Activated T-helper 2 cell treated with anti-CD3 and anti-CD28 coated beads, Interferon-gamma antibody, Interleukin-2, Interleukin-4, amounts not matched to agents 10 μg/mL and 5 μg/mL and 100 μg/mL, durations not matched to agents 14 hours and 24 hours and 36 hours (primary cell): ENCODE measurements at regions of chr12 and their contacts with region 1.

Region 1: DNA sequence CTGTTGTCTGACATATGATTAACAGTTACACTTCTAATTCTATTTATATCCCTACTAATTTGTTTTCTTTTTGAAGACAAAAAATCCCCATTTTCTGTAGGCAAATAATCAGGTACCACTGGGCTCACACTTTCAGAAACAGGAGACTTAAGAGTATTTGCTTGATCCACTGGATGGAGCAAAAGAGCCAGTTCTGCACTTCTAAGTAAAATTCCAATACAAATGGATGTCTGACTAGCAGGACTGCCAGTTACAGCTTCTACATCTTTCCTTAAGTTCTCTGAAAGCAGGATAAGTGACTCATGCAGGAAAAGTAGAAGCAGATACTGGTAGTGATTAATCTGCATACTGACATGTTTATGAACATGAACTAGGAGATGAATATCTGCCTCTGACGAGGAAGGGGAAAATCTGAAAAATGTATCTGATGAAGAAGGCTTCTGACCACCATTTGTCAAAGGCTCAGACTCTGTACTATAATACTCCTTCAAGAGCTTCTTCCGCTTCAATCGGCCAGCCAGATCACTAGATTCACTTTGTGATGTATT is 73.8 kb upstream of the ANKS1B start:
- DNase-seq: no peak
- H3K4me3 Mint-ChIP-seq: peak overlapping the region; percentile 34
- H3K27ac Mint-ChIP-seq: peak overlapping the region; percentile 83
- H3K4me1 Mint-ChIP-seq: peaks cover 18% of the 10 kb centered on the region
- H3K27me3 Mint-ChIP-seq: no peaks in the 10 kb centered on the region

Region 2: DNA sequence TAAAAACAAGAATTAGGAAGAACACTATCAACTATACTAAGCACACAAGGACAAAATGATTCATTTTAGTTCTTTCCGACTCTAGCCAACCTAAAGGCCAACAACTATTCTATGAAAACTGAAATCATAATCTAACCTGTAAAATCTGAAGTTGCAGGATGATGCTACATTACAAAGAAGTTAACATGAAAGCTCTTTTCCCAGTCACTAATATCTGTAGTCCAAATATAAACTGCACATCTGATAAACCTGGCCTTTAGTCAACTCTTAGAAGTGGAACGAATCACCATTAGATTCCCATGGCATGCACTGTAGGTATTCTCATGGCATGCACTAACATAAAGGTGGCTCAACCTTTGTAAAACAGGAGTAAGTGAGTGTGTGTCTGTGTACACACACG is 42.4 kb after region 1 on chr12:
- intact Hi-C with region 1: loop called (anchors 5 kb)
- DNase-seq: no peak
- H3K4me3 Mint-ChIP-seq: no peak overlapping the region
- H3K27ac Mint-ChIP-seq: peak overlapping the region; percentile 69
- H3K4me1 Mint-ChIP-seq: peaks cover 11% of the 10 kb centered on the region
- H3K27me3 Mint-ChIP-seq: no peaks in the 10 kb centered on the region

Region 3: GRCh38 chr12:100142851-100143559 is 84.4 kb after region 1 on chr12 and contains the start of gene BLTP3B:
- intact Hi-C with region 1: loop called (anchors 2 kb)
- DNase-seq: peak; percentile 82
- H3K4me3 Mint-ChIP-seq: peak within 1 kb of the TSS; percentile 94
- H3K27ac Mint-ChIP-seq: peak within 1 kb of the TSS; percentile 98
- H3K4me1 Mint-ChIP-seq: peaks cover 36% of the 10 kb centered on the region
- H3K27me3 Mint-ChIP-seq: no peaks in the 10 kb centered on the region
- total RNA-seq, gene BLTP3B: 69.0 and 73.2 TPM in 2 replicates